ENCODE measurements at regions of chr9 and their contacts with region 1.

Region 1: GRCh38 chr9:115262477-115262876 is 144.5 kb upstream of the TNC start:
- DNase-seq: peak; percentile 100
- H3K4me3 ChIP-seq: no peak overlapping the region
- H3K27ac ChIP-seq: peak overlapping the region; percentile 100
- H3K4me1 ChIP-seq: peaks cover 41% of the 10 kb centered on the region
- H3K27me3 ChIP-seq: no peaks in the 10 kb centered on the region
- CTCF ChIP-seq: no peak

Region 2: GRCh38 chr9:114754581-114754980 is 507.9 kb before region 1 on chr9:
- CTCF ChIA-PET with region 1: no interaction called
- dilution Hi-C with region 1: no loop called
- in situ Hi-C with region 1: no loop called
- intact Hi-C with region 1: no loop called
- DNase-seq: no peak
- H3K4me3 ChIP-seq: no peak overlapping the region
- H3K27ac ChIP-seq: no peak overlapping the region
- H3K4me1 ChIP-seq: no peaks in the 10 kb centered on the region
- H3K27me3 ChIP-seq: no peaks in the 10 kb centered on the region
- CTCF ChIP-seq: no peak

Region 3: GRCh38 chr9:114894801-114895433 is 367.6 kb before region 1 on chr9:
- CTCF ChIA-PET with region 1: no interaction called
- dilution Hi-C with region 1: no loop called
- in situ Hi-C with region 1: no loop called
- intact Hi-C with region 1: no loop called
- DNase-seq: peak; percentile 88
- H3K4me3 ChIP-seq: no peak overlapping the region
- H3K27ac ChIP-seq: peak overlapping the region; percentile 68
- H3K4me1 ChIP-seq: peaks cover 31% of the 10 kb centered on the region
- H3K27me3 ChIP-seq: no peaks in the 10 kb centered on the region
- CTCF ChIP-seq: no peak

Region 4: GRCh38 chr9:115164511-115164974 is 97.9 kb before region 1 on chr9:
- CTCF ChIA-PET with region 1: no interaction called
- dilution Hi-C with region 1: loop called (anchors 5 kb)
- in situ Hi-C with region 1: no loop called
- intact Hi-C with region 1: no loop called
- DNase-seq: peak; percentile 61
- H3K4me3 ChIP-seq: no peak overlapping the region
- H3K27ac ChIP-seq: peak overlapping the region; percentile 26
- H3K4me1 ChIP-seq: peaks cover 28% of the 10 kb centered on the region
- H3K27me3 ChIP-seq: no peaks in the 10 kb centered on the region
- CTCF ChIP-seq: no peak

Region 5: DNA sequence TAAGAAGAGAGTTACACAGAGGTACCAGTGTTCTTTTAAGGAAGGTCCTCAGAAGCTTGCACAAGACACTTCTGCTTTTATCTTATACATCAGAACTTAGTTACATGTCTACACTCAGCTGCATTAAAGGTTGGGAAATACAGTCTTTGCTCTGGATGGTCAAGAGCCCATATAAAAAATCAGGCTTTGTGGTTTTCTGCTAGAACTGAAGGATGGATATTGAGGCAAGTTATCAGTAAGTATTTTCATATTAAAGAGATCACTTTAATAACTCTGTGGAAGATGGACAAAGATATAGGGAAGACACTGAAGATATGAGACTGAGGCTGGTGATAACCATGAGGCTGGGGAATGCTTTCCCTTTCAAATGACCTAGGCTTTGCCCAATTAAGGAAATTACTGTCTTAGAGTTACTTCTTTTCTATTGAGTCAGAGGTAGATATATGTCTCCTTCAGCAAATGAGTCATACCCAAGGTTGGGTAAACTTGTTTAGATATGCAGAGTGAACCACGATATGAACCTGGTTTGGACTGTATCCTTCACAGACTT is 57.5 kb before region 1 on chr9:
- CTCF ChIA-PET with region 1: no interaction called
- dilution Hi-C with region 1: loop called (anchors 5 kb)
- in situ Hi-C with region 1: no loop called
- intact Hi-C with region 1: no loop called
- DNase-seq: peak; percentile 92
- H3K4me3 ChIP-seq: no peak overlapping the region
- H3K27ac ChIP-seq: peak overlapping the region; percentile 63
- H3K4me1 ChIP-seq: peaks cover 65% of the 10 kb centered on the region
- H3K27me3 ChIP-seq: no peaks in the 10 kb centered on the region
- CTCF ChIP-seq: no peak

Region 6: GRCh38 chr9:115211413-115212124 is 50.9 kb before region 1 on chr9:
- CTCF ChIA-PET with region 1: no interaction called
- dilution Hi-C with region 1: no loop called
- in situ Hi-C with region 1: no loop called
- intact Hi-C with region 1: loop called (anchors 2 kb)
- DNase-seq: no peak
- H3K4me3 ChIP-seq: no peak overlapping the region
- H3K27ac ChIP-seq: no peak overlapping the region
- H3K4me1 ChIP-seq: peaks cover 40% of the 10 kb centered on the region
- H3K27me3 ChIP-seq: no peaks in the 10 kb centered on the region
- CTCF ChIP-seq: no peak

Region 7: DNA sequence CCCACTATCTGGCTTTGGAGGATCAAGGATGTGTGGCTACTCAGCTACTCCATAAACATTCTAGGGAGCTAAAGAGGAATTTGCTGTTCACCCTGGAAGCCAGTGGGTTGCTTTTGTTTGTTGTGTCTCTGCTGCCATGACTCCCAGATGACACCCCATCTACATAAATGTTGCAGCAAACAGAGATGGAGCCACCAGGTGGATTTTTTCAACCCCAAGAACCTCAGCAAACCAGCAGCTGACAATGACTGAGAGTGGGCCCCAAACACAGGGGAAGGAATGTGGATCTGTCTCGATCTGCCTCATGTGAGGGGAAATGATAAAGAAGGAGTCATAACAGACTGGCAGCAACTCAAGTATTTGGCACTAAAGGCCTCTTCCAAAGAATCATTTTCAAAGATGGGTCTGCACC is 11.8 kb before region 1 on chr9:
- CTCF ChIA-PET with region 1: no interaction called
- dilution Hi-C with region 1: no loop called
- in situ Hi-C with region 1: no loop called
- intact Hi-C with region 1: loop called (anchors 1 kb)
- DNase-seq: peak; percentile 98
- H3K4me3 ChIP-seq: no peak overlapping the region
- H3K27ac ChIP-seq: peak overlapping the region; percentile 92
- H3K4me1 ChIP-seq: peaks cover 21% of the 10 kb centered on the region
- H3K27me3 ChIP-seq: no peaks in the 10 kb centered on the region
- CTCF ChIP-seq: peak; percentile 1 to 16

Measured in mammary epithelial cell (primary cell).